ENCODE measurements at regions of chr15 and their contacts with region 1.

Region 1: GRCh38 chr15:94467034-94467433 is 235.7 kb downstream of the MCTP2 start:
- DNase-seq: peak in 1 of 2 experiments; percentile 22
- H3K4me3 ChIP-seq: no peak overlapping the region
- H3K4me3 Mint-ChIP-seq: no peak overlapping the region
- H3K27ac Mint-ChIP-seq: no peak overlapping the region
- H3K4me1 ChIP-seq: no peaks in the 10 kb centered on the region
- H3K4me1 Mint-ChIP-seq: no peaks in the 10 kb centered on the region
- H3K27me3 ChIP-seq: no peaks in the 10 kb centered on the region
- H3K27me3 Mint-ChIP-seq: no peaks in the 10 kb centered on the region
- CTCF ChIP-seq: peak in 1 of 2 experiments; percentile 32

Region 2: DNA sequence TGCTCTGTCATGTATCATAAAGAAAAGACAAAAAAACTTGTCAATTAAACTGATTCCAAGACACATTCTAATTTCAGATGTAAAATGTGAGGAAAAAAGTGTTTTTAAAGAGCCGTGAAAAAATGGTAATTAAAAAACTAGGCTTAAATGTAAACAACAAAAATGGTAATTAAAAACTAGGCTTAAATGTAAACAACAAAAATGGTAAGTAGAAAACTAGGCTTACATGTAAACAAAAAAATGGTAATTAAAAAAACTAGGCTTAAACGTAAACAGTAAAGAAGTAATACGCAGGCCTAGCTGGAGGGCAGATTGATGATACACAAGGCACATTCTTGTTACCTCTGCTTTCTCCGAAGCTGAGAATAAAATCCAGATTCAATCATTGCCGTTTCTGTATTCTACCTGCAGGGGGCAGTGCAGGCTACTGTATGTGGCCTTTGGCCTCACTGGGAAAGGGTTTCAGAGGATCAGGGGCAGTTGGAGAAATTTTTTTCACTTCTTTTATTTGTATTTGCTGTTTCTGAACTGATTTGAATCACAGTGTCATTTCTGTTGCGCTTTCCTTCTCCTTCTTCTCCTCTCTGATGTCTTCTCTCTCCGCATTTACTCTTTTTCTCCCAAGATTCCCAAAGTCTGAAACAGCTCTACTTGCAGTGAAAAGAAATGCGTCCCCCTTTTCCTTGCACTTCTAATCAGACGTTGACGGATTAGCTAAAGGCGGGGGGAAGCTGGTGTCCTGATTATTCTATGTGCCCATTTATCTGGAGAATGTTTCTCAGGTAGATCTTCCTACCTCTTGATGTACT is 302.8 kb before region 1 on chr15:
- CTCF ChIA-PET with region 1: interaction called, 6 read pairs
- POLR2A ChIA-PET with region 1: no interaction called
- intact Hi-C with region 1: loop called (anchors 5 kb)
- DNase-seq: peak; percentile 53 to 80
- H3K4me3 ChIP-seq: no peak overlapping the region
- H3K4me3 Mint-ChIP-seq: no peak overlapping the region
- H3K27ac Mint-ChIP-seq: no peak overlapping the region
- H3K4me1 ChIP-seq: no peaks in the 10 kb centered on the region
- H3K4me1 Mint-ChIP-seq: no peaks in the 10 kb centered on the region
- H3K27me3 ChIP-seq: no peaks in the 10 kb centered on the region
- H3K27me3 Mint-ChIP-seq: peaks cover 2% of the 10 kb centered on the region
- CTCF ChIP-seq: peak; percentile 81 to 88